Activated CD4-positive, alpha-beta T cell treated with anti-CD3 and anti-CD28 coated beads for 36 hours (primary cell): ENCODE measurements at regions of chr12 and their contacts with region 1.

Region 1: DNA sequence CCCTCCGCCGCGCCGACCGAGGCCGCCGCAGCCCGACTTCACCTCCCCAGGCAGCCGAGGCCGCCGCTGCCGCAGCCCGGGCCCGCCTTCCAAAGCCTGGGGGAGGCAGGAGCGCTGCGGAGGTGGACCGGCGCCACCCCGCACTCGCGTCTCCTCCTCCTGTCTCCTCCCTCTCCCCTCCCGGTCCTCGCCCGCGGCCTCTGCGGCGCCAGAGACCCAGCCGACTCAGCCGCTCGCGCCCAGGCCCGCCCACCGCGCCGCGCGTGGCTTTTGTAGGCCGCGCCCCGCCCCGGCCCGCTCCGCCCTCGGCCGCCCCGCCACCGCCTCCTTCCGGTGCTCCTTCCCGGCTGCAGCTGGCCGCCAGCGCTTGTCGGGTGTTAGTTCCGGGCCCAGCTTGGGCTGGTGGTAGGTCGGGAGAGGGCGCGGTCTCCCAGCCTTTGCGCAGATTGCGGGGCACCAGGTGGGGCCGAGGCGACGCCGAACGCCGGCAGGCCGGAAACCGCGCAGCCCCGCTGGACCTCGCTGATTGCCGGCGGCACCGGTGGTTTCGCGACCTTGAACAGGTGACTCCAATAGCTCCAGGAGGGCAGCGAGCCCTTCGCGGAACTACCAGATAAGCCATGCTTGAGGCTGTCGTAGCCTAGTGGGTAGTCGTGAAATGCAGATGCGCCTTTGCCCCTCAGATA is at the start of gene CAPRIN2:
- DNase-seq: peak; percentile 96
- ATAC-seq: peak; percentile 94
- H3K4me3 Mint-ChIP-seq: peak within 1 kb of the TSS; percentile 86
- H3K27ac Mint-ChIP-seq: peak within 1 kb of the TSS; percentile 78
- H3K4me1 Mint-ChIP-seq: peaks cover 36% of the 10 kb centered on the region
- H3K27me3 Mint-ChIP-seq: no peaks in the 10 kb centered on the region
- total RNA-seq, gene CAPRIN2: 10.0 to 19.8 TPM

Region 2: GRCh38 chr12:30546121-30546520 is 208.7 kb before region 1 on chr12:
- CTCF ChIA-PET with region 1: no interaction called
- POLR2A ChIA-PET with region 1: no interaction called
- intact Hi-C with region 1: no loop called
- DNase-seq: no peak
- ATAC-seq: no peak
- H3K4me3 Mint-ChIP-seq: no peak overlapping the region
- H3K27ac Mint-ChIP-seq: no peak overlapping the region
- H3K4me1 Mint-ChIP-seq: no peaks in the 10 kb centered on the region
- H3K27me3 Mint-ChIP-seq: peaks cover 4% of the 10 kb centered on the region

Region 3: GRCh38 chr12:30695199-30696103 is 59.4 kb before region 1 on chr12 and contains the start of gene IPO8:
- CTCF ChIA-PET with region 1: interaction called, 7 read pairs
- POLR2A ChIA-PET with region 1: interaction called, 8 read pairs
- intact Hi-C with region 1: loop called (anchors 1 kb)
- DNase-seq: peak; percentile 91
- ATAC-seq: peak; percentile 90
- H3K4me3 Mint-ChIP-seq: peak within 1 kb of the TSS; percentile 93
- H3K27ac Mint-ChIP-seq: peak within 1 kb of the TSS; percentile 95
- H3K4me1 Mint-ChIP-seq: peaks cover 37% of the 10 kb centered on the region
- H3K27me3 Mint-ChIP-seq: no peaks in the 10 kb centered on the region
- total RNA-seq, gene IPO8: 48.7 to 51.4 TPM

Region 4: DNA sequence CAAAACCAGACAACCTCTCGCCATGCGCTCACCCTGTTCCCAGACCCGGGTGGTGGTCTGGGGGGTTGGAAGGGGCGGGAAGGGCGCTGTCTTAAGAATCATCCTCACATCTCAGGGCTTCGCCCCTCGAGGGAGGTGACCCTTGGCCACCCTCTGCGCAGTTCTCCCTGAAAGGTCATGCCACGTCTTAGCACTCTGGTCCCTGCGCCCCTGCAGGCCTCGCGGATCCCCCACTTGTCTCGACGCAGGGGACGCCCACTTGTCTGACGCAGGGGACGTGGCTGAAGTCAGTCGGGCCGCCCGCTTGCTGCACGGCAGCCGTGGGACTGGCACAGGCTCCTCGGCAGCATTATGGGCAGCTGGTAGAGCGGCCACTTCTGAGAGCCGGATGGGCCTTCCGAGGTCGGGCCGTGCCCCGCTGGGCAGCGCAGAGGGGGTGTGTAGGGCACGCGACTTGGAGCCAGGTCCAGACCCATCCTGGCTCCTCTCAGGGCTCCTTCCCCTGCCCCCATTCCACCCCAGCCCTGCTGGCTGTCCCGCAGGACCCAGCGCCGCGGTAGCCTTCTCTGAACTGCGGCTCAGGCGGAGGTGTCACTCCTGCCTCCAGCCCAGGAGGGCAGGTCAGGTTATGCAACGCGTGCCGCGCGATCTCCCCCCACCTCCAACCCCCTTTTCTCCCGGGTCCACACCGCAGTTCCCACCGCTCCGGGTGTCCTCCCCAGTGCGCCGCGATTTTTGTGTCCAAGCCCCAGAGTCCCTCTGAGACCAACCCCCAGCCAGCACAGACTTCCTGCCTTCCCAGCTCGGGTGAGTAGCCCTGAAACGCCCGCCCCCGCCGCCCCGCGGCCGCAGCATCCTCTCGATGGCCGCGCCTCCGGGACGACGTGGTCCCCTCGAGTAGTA is 40.8 kb after region 1 on chr12:
- CTCF ChIA-PET with region 1: interaction called, 6 read pairs
- POLR2A ChIA-PET with region 1: no interaction called
- intact Hi-C with region 1: loop called (anchors 1 to 2 kb)
- DNase-seq: peak; percentile 81
- ATAC-seq: peak; percentile 82
- H3K4me3 Mint-ChIP-seq: peak overlapping the region; percentile 65
- H3K27ac Mint-ChIP-seq: peak overlapping the region; percentile 0
- H3K4me1 Mint-ChIP-seq: peaks cover 17% of the 10 kb centered on the region
- H3K27me3 Mint-ChIP-seq: peaks cover 33% of the 10 kb centered on the region